AG04449 (cell line): ENCODE measurements at regions of chr17 and their contacts with region 1.

Region 1: DNA sequence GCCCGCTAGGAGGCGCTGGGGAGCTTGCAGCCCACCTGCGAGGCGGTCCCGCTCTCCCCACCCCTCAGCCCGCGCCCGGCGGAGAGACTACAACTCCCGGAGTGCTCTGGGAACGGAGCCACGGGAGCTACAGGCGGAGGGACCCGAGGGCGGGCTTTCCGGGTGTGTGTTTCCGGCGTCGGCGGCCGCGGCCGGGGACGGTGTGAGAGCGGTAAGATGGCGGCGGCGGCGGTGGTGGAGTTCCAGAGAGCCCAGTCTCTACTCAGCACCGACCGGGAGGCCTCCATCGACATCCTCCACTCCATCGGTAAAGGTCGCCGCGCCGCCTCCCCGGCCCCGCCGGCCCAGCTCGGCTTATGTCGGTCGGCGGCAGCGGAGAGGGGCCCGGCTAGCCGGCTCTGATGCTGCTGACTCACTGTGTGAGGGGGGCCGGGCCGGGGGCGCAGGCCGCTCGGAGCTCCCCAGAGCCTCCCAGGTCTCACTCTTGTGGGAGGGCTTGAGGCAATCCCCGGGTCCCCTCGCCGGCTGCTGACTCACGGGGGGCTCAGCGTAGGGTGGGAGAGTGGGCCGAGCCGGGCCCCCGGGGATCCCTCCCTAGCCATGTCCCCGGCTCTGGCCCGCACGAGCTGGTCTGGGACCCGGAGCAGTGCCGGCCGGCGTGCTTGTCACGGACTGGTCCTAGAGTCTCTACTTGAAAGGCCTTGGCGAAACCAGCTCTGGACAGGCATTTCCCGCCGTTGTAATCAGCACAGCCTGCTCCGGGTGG is at the start of gene PSMD11:
- DNase-seq: peak; percentile 60
- H3K4me3 ChIP-seq: peak within 1 kb of the TSS; percentile 88
- CTCF ChIP-seq: peak; percentile 95

Region 2: DNA sequence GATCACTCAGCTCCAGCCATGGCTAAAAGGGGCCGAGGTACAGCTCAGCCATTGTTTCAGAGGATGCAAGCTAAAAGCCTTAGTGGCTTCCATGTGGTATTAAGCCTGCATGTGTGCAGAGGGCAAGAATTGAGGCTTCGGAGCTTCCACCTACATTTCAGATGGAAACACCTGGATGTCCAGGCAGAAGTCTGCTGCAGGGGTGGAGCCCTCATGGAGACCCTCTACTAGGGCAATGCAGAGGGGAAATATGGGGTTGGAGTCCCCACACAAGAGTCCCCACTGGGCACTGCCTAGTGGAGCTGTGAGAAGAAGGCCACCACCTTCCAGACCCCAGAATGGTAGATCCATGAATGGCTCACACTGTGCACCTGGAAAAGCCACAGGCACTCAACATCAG is 14.9 kb before region 1 on chr17:
- CTCF ChIA-PET with region 1: interaction called, 38 read pairs
- POLR2A ChIA-PET with region 1: no interaction called
- DNase-seq: no peak
- H3K4me3 ChIP-seq: no peak overlapping the region
- CTCF ChIP-seq: no peak